ENCODE measurements at regions of chr9 and their contacts with region 1.

Region 1: GRCh38 chr9:131739980-131740648 is at the start of gene RAPGEF1:
- DNase-seq: peak; percentile 97
- H3K4me3 ChIP-seq: peak within 1 kb of the TSS; percentile 77 to 85
- H3K27ac ChIP-seq: peak within 1 kb of the TSS; percentile 11 to 68; a peak in 2 of 4 replicates
- H3K4me1 ChIP-seq: peaks cover 7 to 12% of the 10 kb centered on the region in 2 experiments; a peak in 3 of 4 replicates
- H3K27me3 ChIP-seq: no peaks in the 10 kb centered on the region
- CTCF ChIP-seq: peak; percentile 79
- EP300 ChIP-seq: no peak
- RAD21 ChIP-seq: peak; percentile 73
- polyA plus RNA-seq, gene RAPGEF1: 26.2 and 27.0 TPM in 2 replicates

Region 2: DNA sequence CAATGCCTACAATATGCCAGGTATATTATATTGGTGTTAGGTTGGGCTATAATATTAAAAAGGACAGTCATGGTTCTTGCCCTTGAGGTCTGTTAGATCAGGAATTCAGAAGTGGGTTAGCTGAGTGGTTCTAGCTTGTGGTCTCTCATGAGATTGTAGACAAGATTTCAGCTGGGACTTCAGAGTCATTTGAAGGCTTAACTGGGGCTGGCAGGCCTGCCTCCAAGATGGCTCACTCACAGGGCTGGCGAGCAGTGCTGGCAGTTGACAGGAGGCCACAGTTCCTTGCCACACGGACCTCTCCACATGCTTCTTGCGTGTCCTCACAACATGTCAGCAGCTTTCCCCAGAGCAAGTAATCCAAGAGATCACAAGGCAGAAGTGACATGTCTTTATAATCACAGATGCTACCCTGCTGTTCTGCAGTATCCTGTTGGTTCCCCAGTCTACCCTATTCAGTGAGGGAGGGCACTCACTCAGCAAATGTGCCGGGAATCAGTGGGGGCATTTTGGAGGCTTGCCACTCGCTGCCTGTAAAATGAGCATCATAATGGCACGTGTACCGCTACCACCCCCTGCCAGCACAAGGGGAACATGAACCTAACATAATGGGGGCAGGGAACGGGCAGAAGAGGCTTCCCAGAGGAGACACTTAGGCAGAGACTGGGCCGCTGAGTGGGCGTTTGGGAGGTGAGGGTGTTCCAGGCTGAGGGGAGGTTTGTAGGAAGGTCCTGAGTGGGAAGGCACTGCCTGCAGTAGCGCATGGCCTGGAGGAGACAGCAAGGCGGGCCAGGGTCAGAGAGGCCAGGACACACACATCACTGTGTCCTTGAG is 976.5 kb before region 1 on chr9:
- CTCF ChIA-PET with region 1: no interaction called
- POLR2A ChIA-PET with region 1: no interaction called
- DNase-seq: no peak
- H3K4me3 ChIP-seq: no peak overlapping the region
- H3K27ac ChIP-seq: peak overlapping the region in 1 of 2 experiments; percentile 24; a peak in 1 of 4 replicates
- H3K4me1 ChIP-seq: peaks cover 6 to 33% of the 10 kb centered on the region in 2 experiments; a peak in 3 of 4 replicates
- H3K27me3 ChIP-seq: no peaks in the 10 kb centered on the region
- CTCF ChIP-seq: no peak
- EP300 ChIP-seq: no peak
- RAD21 ChIP-seq: no peak

Region 3: DNA sequence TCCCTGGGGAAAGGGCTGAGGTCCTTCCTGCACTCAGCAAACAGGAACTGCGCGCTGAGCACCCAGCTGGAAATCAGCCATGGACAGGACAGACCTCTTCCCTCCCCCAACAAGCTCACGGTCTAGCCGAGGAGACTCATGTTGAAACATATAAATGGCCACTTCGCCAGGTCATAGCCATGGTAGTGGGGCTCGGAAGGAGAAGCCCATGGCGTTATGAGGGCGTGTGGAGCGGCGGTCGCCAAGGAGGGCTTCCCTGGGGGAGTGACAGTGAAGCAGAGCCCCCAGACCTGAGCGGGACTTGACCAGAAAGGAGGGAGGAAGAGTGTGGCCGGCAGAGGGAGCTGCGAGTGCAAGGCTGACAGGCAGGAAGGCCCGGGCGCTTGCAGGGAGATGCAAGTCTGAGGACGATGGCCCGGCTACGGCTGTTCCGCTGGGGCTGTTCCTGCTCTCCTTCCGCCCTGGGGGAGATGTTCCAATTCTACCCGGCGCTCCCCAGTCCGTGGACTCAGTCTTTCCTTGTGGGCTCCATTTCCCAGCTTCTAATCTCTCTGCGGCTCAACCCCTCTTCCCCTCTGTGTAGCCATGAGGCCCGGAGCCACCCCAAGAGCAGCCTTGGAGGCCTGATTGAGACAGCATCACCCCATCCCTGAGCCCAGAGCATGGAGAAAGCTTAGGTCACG is 390.1 kb before region 1 on chr9:
- CTCF ChIA-PET with region 1: interaction called, 15 read pairs
- POLR2A ChIA-PET with region 1: no interaction called
- DNase-seq: peak; percentile 90
- H3K4me3 ChIP-seq: peak overlapping the region; percentile 40 to 67
- H3K27ac ChIP-seq: no peak overlapping the region
- H3K4me1 ChIP-seq: peaks cover 0 to 5% of the 10 kb centered on the region in 2 experiments; a peak in 1 of 4 replicates
- H3K27me3 ChIP-seq: no peaks in the 10 kb centered on the region
- CTCF ChIP-seq: peak; percentile 81
- EP300 ChIP-seq: no peak
- RAD21 ChIP-seq: peak; percentile 85

Region 4: GRCh38 chr9:131590908-131591844 is 148.9 kb before region 1 on chr9:
- CTCF ChIA-PET with region 1: interaction called, 55 read pairs
- POLR2A ChIA-PET with region 1: no interaction called
- DNase-seq: peak; percentile 91
- H3K4me3 ChIP-seq: no peak overlapping the region; a peak in 1 of 4 replicates
- H3K27ac ChIP-seq: no peak overlapping the region
- H3K4me1 ChIP-seq: no peaks in the 10 kb centered on the region
- H3K27me3 ChIP-seq: no peaks in the 10 kb centered on the region
- CTCF ChIP-seq: peak; percentile 82
- EP300 ChIP-seq: no peak
- RAD21 ChIP-seq: peak; percentile 91

Region 5: GRCh38 chr9:131621551-131622358 is 118.4 kb before region 1 on chr9:
- CTCF ChIA-PET with region 1: interaction called, 13 read pairs
- POLR2A ChIA-PET with region 1: no interaction called
- DNase-seq: no peak
- H3K4me3 ChIP-seq: no peak overlapping the region
- H3K27ac ChIP-seq: no peak overlapping the region
- H3K4me1 ChIP-seq: peaks cover 0 to 32% of the 10 kb centered on the region in 2 experiments; a peak in 2 of 4 replicates
- H3K27me3 ChIP-seq: no peaks in the 10 kb centered on the region
- CTCF ChIP-seq: no peak
- EP300 ChIP-seq: no peak
- RAD21 ChIP-seq: no peak

Region 6: DNA sequence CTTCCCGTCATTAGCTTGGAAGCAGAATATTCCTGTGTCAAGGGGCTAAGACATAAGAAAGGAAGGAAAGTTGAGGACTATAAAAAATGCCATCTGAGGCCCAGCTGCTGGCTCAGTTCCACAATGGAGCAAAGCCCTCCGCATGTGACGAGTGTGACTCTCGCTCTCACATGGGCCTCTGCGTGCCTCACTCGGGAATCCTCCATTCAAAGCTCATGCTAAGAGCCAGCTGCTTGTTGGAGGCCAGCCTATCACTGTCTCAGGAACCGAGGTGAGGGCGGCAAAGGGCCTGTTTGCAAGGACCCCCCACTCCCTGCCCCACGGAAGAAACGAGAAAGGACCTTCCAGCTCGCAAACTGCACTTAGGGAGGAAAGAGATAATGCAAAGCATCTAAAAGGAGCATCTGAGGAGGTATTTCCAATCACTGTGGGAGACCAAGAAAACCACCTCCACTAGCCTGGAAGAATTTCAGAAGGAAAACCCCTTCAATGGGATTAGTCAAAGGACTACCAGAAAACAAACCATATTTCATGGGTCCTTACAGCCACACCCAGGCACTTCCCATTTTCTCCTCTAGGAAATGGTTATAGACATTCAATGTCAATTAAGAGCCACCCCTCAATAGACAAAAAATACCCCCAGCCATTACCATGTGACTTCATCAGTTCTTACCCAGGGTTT is 99.5 kb before region 1 on chr9:
- CTCF ChIA-PET with region 1: interaction called, 15 read pairs
- POLR2A ChIA-PET with region 1: no interaction called
- DNase-seq: no peak
- H3K4me3 ChIP-seq: no peak overlapping the region
- H3K27ac ChIP-seq: no peak overlapping the region
- H3K4me1 ChIP-seq: peaks cover under 1 to 6% of the 10 kb centered on the region in 2 experiments; a peak in 2 of 4 replicates
- H3K27me3 ChIP-seq: no peaks in the 10 kb centered on the region
- CTCF ChIP-seq: no peak
- EP300 ChIP-seq: no peak
- RAD21 ChIP-seq: no peak

Region 7: DNA sequence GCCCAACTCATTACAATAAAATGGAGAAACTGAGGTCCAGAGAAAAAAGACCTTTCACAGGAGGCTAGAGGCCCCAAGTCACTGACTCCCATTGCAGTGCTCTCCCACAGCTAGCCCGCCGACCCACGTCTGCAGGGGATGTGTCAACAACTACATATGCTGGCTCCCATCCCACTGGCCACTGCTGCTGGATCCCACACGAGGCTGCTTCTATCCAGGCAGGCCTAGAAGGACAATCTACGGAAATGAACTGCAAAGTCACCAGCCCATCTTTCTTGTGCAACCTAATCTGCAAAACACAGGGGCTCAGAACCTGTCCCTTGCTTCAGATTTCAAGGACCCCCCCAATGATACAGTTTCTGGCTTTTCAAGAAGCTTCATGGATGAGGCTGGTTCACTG is 24.2 kb before region 1 on chr9:
- CTCF ChIA-PET with region 1: interaction called, 11 read pairs
- POLR2A ChIA-PET with region 1: no interaction called
- DNase-seq: no peak
- H3K4me3 ChIP-seq: no peak overlapping the region
- H3K27ac ChIP-seq: no peak overlapping the region
- H3K4me1 ChIP-seq: peaks cover 0 to 3% of the 10 kb centered on the region in 2 experiments; a peak in 1 of 4 replicates
- H3K27me3 ChIP-seq: no peaks in the 10 kb centered on the region
- CTCF ChIP-seq: no peak
- EP300 ChIP-seq: no peak
- RAD21 ChIP-seq: no peak

Region 8: GRCh38 chr9:131755541-131756198 is 15.6 kb after region 1 on chr9:
- CTCF ChIA-PET with region 1: interaction called, 78 read pairs
- POLR2A ChIA-PET with region 1: no interaction called
- DNase-seq: peak; percentile 86
- H3K4me3 ChIP-seq: peak overlapping the region in 1 of 2 experiments; percentile 20; a peak in 1 of 4 replicates
- H3K27ac ChIP-seq: no peak overlapping the region
- H3K4me1 ChIP-seq: no peaks in the 10 kb centered on the region
- H3K27me3 ChIP-seq: no peaks in the 10 kb centered on the region; the same call in 1 of the 2 replicates
- CTCF ChIP-seq: peak; percentile 79
- EP300 ChIP-seq: no peak
- RAD21 ChIP-seq: peak; percentile 80

Region 9: DNA sequence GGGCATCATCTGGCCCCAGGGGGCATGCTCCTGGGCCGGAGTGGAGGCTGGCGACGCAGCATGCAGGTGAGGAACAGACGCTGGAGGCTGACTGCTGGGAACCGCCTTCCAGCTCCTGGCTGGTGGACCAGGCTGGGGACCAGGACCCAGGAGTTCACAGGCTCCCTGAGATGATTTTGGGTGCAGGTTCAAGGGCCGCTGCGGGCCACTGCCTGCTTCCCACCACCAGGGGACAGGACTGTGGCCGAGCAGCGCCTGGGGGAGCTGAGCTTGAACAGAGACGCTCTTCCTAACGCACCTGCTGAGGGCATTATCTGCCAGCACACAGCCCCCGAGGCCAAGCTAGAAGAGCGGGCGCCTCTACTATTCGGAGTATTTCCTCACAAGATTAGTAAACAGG is 131.9 kb after region 1 on chr9:
- CTCF ChIA-PET with region 1: no interaction called
- POLR2A ChIA-PET with region 1: no interaction called
- DNase-seq: no peak
- H3K4me3 ChIP-seq: no peak overlapping the region
- H3K27ac ChIP-seq: no peak overlapping the region
- H3K4me1 ChIP-seq: peaks cover 0 to 33% of the 10 kb centered on the region in 2 experiments; a peak in 2 of 4 replicates
- H3K27me3 ChIP-seq: no peaks in the 10 kb centered on the region
- CTCF ChIP-seq: peak; percentile 34
- EP300 ChIP-seq: no peak
- RAD21 ChIP-seq: 0 out of 2 replicates have a peak, but pooled peaks have one; percentile 16